H1 (cell line): ENCODE measurements at regions of chr20 and their contacts with region 1.

Region 1: GRCh38 chr20:33862709-33863403 is 51.7 kb downstream of the CHMP4B start:
- DNase-seq: peak; percentile 46 to 93
- H3K4me3 ChIP-seq: peak overlapping the region in 1 of 4 experiments; percentile 52; a peak in 4 of 8 replicates
- H3K27ac ChIP-seq: no peak overlapping the region
- H3K4me1 ChIP-seq: peaks cover 0 to 5% (median 4%) of the 10 kb centered on the region in 4 experiments; a peak in 4 of 7 replicates
- H3K27me3 ChIP-seq: no peaks in the 10 kb centered on the region
- CTCF ChIP-seq: peak; percentile 84 to 89 (median 88)
- EP300 ChIP-seq: no peak
- POLR2A ChIP-seq: no peak
- RAD21 ChIP-seq: peak; percentile 89 to 90

Region 2: DNA sequence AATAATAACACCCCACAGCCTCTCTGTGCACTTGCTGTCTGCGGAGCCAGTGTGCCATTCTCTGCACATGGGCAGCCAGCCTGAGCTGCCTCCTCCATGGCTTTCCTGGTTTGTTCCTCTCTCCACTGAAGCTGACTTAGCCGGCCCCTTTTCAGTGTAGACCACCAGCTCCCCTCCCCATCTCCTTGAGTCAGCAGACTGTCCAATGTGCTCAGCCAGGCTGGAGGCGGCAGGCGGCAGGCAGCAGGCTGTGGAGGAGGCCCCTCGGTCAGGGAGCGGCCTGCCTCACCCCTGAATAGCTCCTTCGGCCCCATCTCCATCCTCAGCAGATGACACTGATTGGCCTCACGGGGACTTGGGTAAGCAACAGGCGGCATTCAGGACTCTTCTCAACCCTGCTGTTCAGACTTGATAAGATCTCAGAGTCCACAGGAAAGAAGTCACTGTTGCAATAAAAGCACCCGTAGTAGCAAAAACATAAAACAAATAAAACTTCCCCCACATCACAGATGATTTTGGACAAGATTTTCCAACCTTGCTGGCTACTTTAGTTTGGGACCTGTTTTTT is 218.0 kb before region 1 on chr20:
- CTCF ChIA-PET with region 1: no interaction called
- POLR2A ChIA-PET with region 1: no interaction called
- DNase-seq: no peak
- H3K4me3 ChIP-seq: no peak overlapping the region
- H3K27ac ChIP-seq: no peak overlapping the region
- H3K4me1 ChIP-seq: no peaks in the 10 kb centered on the region
- H3K27me3 ChIP-seq: no peaks in the 10 kb centered on the region
- CTCF ChIP-seq: no peak
- EP300 ChIP-seq: no peak
- POLR2A ChIP-seq: no peak
- RAD21 ChIP-seq: no peak

Region 3: GRCh38 chr20:33874129-33874528 is 11.3 kb after region 1 on chr20:
- CTCF ChIA-PET with region 1: interaction called, 15 read pairs
- POLR2A ChIA-PET with region 1: no interaction called
- DNase-seq: no peak
- H3K4me3 ChIP-seq: no peak overlapping the region
- H3K27ac ChIP-seq: no peak overlapping the region
- H3K4me1 ChIP-seq: no peaks in the 10 kb centered on the region
- H3K27me3 ChIP-seq: no peaks in the 10 kb centered on the region
- CTCF ChIP-seq: no peak
- EP300 ChIP-seq: no peak
- POLR2A ChIP-seq: no peak
- RAD21 ChIP-seq: no peak

Region 4: GRCh38 chr20:33897313-33897912 is 34.6 kb after region 1 on chr20:
- CTCF ChIA-PET with region 1: interaction called, 24 read pairs
- POLR2A ChIA-PET with region 1: no interaction called
- DNase-seq: no peak
- H3K4me3 ChIP-seq: no peak overlapping the region
- H3K27ac ChIP-seq: no peak overlapping the region
- H3K4me1 ChIP-seq: peaks cover 0 to 1% (median 0%) of the 10 kb centered on the region in 4 experiments; a peak in 2 of 7 replicates
- H3K27me3 ChIP-seq: no peaks in the 10 kb centered on the region
- CTCF ChIP-seq: peak; percentile 20 to 43 (median 42); a peak in 3 of 4 replicates
- EP300 ChIP-seq: no peak
- POLR2A ChIP-seq: no peak
- RAD21 ChIP-seq: 0 out of 4 replicates have a peak, but pooled peaks of 1 of the 2 experiments have one; percentile 3

Region 5: GRCh38 chr20:33915726-33916331 is 53.0 kb after region 1 on chr20:
- CTCF ChIA-PET with region 1: interaction called, 29 read pairs
- POLR2A ChIA-PET with region 1: interaction called, 5 read pairs
- DNase-seq: peak in 1 of 2 experiments; percentile 85
- H3K4me3 ChIP-seq: no peak overlapping the region
- H3K27ac ChIP-seq: no peak overlapping the region
- H3K4me1 ChIP-seq: no peaks in the 10 kb centered on the region
- H3K27me3 ChIP-seq: no peaks in the 10 kb centered on the region
- CTCF ChIP-seq: peak; percentile 76 to 92 (median 85)
- EP300 ChIP-seq: no peak
- POLR2A ChIP-seq: no peak
- RAD21 ChIP-seq: peak; percentile 50 to 66

Region 6: DNA sequence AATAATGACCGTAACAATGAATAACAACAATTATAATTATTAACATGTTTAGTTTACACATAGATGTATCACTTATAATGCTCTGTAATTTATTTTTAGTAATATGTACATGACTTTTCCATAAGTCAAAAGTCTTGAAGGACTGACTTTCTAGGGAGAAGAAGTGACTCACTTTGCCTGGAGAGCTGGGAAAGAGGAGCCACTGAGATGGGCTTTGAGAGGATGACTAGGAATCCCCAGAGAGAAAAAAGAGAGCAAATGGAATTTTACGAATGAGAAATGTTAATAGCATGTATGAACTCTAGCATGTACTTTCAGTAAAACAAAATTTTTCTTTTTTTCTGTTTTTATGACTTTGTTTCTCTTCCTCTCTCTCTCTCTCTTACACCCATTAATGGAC is 63.0 kb after region 1 on chr20:
- CTCF ChIA-PET with region 1: interaction called, 11 read pairs
- POLR2A ChIA-PET with region 1: no interaction called
- DNase-seq: no peak
- H3K4me3 ChIP-seq: no peak overlapping the region
- H3K27ac ChIP-seq: no peak overlapping the region
- H3K4me1 ChIP-seq: no peaks in the 10 kb centered on the region
- H3K27me3 ChIP-seq: no peaks in the 10 kb centered on the region
- CTCF ChIP-seq: no peak
- EP300 ChIP-seq: no peak
- POLR2A ChIP-seq: no peak
- RAD21 ChIP-seq: no peak

Region 7: DNA sequence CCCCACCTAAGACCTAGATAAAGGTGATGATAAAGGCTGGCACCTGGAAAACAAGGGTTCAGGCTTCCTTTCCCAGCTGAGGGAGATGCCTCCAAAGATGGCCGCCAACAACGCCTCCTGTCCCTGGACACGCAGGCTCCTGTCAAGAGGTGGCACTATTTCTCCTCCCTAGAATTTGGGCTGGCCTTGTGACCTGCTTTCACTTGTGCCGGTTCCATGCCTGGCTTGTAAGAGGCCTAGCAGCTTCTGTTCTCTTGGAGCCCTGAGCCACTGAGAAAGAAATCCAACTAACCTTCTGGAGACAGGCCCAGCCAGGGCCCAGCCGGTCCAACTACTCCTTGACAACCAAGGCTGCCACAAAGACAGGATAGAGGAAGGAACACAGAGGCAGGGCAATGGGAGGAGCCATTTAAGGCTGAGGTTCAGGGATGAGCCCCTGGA is 70.6 kb after region 1 on chr20:
- CTCF ChIA-PET with region 1: interaction called, 11 read pairs
- POLR2A ChIA-PET with region 1: no interaction called
- DNase-seq: peak; percentile 51 to 70
- H3K4me3 ChIP-seq: no peak overlapping the region
- H3K27ac ChIP-seq: no peak overlapping the region
- H3K4me1 ChIP-seq: no peaks in the 10 kb centered on the region
- H3K27me3 ChIP-seq: no peaks in the 10 kb centered on the region
- CTCF ChIP-seq: peak; percentile 80 to 92 (median 82)
- EP300 ChIP-seq: no peak
- POLR2A ChIP-seq: no peak
- RAD21 ChIP-seq: peak; percentile 90 to 94

Region 8: DNA sequence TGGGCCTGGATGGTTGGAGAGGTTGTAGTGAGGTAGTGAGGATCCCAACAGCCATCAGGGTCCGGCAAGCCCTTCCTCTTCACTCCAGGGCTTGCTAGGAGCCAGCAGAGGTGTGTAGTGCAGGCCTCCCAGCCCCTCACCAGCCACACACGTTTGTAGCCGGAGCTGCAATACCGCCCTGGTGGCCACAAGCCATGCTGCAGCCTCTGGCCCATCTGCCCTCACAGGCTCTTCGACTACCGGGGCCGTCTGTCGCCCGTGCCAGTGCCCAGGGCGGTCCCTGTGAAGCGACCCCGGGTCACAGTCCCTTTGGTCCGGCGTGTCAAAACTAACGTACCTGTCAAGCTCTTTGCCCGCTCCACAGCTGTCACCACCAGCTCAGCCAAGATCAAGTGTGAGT is 212.8 kb after region 1 on chr20:
- CTCF ChIA-PET with region 1: interaction called, 32 read pairs
- POLR2A ChIA-PET with region 1: interaction called, 3 read pairs
- DNase-seq: peak in 1 of 2 experiments; percentile 60
- H3K4me3 ChIP-seq: no peak overlapping the region
- H3K27ac ChIP-seq: no peak overlapping the region
- H3K4me1 ChIP-seq: no peaks in the 10 kb centered on the region
- H3K27me3 ChIP-seq: no peaks in the 10 kb centered on the region
- CTCF ChIP-seq: peak; percentile 29 to 63 (median 61); a peak in 3 of 4 replicates
- EP300 ChIP-seq: no peak
- POLR2A ChIP-seq: no peak
- RAD21 ChIP-seq: peak in 1 of 2 experiments; percentile 29; a peak in 1 of 4 replicates